CD4-positive, alpha-beta T cell (primary cell): ENCODE measurements at regions of chr2 and their contacts with region 1.

Region 1: GRCh38 chr2:143259368-143259958 is 130.2 kb downstream of the ARHGAP15 start:
- DNase-seq: peak; percentile 56 to 89 (median 66)
- ATAC-seq: peak; percentile 39
- H3K4me3 ChIP-seq: peak overlapping the region; percentile 13
- H3K4me3 Mint-ChIP-seq: peak overlapping the region; percentile 81
- H3K27ac ChIP-seq: peak overlapping the region in 1 of 2 donors; percentile 50
- H3K27ac Mint-ChIP-seq: peak overlapping the region; percentile 86
- H3K4me1 ChIP-seq: peaks cover 43% of the 10 kb centered on the region
- H3K4me1 Mint-ChIP-seq: peaks cover 85% of the 10 kb centered on the region
- H3K27me3 ChIP-seq: no peaks in the 10 kb centered on the region
- H3K27me3 Mint-ChIP-seq: no peaks in the 10 kb centered on the region
- CTCF ChIP-seq: peak; percentile 89

Region 2: DNA sequence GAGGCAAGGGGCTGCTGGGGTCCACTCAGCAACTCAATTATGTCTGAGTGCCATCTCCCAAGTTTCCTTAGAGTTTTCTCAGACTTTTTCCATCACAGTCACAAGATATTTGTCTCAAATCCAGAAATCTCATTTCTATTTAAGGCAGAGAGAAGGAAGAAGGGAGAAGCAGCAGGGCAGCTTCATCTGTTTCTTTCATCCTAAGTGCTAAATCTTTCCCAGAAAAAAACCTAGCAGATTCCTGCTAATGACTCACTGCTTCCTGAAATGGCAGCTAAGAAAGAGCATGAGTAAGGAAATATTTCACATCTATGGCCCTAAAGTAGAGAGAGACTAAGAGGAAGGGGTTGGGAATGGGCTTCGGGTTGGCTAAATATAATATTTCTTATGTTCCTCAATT is 294.0 kb before region 1 on chr2:
- CTCF ChIA-PET with region 1: no interaction called
- POLR2A ChIA-PET with region 1: no interaction called
- intact Hi-C with region 1: no loop called
- DNase-seq: no peak
- ATAC-seq: no peak
- H3K4me3 ChIP-seq: no peak overlapping the region
- H3K4me3 Mint-ChIP-seq: no peak overlapping the region
- H3K27ac ChIP-seq: no peak overlapping the region
- H3K27ac Mint-ChIP-seq: no peak overlapping the region
- H3K4me1 ChIP-seq: no peaks in the 10 kb centered on the region
- H3K4me1 Mint-ChIP-seq: no peaks in the 10 kb centered on the region
- H3K27me3 ChIP-seq: no peaks in the 10 kb centered on the region
- H3K27me3 Mint-ChIP-seq: peaks cover 4% of the 10 kb centered on the region
- CTCF ChIP-seq: no peak

Region 3: GRCh38 chr2:143001501-143001900 is 258.0 kb before region 1 on chr2:
- CTCF ChIA-PET with region 1: no interaction called
- POLR2A ChIA-PET with region 1: no interaction called
- intact Hi-C with region 1: no loop called
- DNase-seq: no peak
- ATAC-seq: no peak
- H3K4me3 ChIP-seq: no peak overlapping the region
- H3K4me3 Mint-ChIP-seq: no peak overlapping the region
- H3K27ac ChIP-seq: no peak overlapping the region
- H3K27ac Mint-ChIP-seq: no peak overlapping the region
- H3K4me1 ChIP-seq: no peaks in the 10 kb centered on the region
- H3K4me1 Mint-ChIP-seq: no peaks in the 10 kb centered on the region
- H3K27me3 ChIP-seq: peaks cover 2 to 15% of the 10 kb centered on the region in 2 experiments
- H3K27me3 Mint-ChIP-seq: peaks cover 64% of the 10 kb centered on the region
- CTCF ChIP-seq: no peak

Region 4: DNA sequence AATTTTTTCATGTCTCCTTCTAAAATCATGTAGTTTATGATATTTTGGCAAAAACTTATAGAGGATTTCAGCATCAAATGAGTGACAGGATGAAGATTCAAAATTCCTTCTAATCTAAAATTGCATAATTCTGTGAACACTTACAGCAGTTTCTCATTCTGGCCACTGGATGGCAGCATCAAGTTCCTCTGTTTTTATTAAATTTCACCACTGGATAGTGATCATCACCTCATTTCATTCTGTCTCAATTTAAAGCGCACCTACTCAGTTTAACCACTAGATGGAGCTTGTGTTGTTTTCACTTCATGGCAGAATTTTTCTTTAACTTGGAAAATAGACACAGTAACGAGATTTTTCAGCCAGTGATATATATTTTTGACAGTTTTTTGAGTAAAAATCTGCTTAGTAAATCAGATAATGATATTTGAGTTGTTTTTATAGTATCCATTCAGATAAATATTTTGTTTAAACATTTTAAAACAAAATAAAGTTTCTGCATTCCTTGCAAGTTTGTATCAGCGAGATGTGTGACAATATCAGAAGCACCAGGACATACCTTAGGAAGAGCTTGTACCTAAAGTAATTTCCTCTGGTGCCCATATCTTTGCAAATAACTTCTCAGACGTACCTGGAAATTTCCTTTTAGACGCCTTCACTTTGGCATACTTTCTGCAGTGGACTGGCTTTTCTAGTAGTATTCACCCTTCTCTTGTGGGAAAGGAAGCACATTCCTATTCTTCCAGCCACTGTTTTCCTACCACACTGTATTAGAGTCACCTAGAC is 225.0 kb before region 1 on chr2:
- CTCF ChIA-PET with region 1: interaction called, 16 read pairs
- POLR2A ChIA-PET with region 1: interaction called, 4 read pairs
- intact Hi-C with region 1: loop called (anchors 1 to 2 kb)
- DNase-seq: peak; percentile 20 to 88 (median 38)
- ATAC-seq: peak; percentile 100
- H3K4me3 ChIP-seq: no peak overlapping the region
- H3K4me3 Mint-ChIP-seq: no peak overlapping the region
- H3K27ac ChIP-seq: no peak overlapping the region
- H3K27ac Mint-ChIP-seq: no peak overlapping the region
- H3K4me1 ChIP-seq: no peaks in the 10 kb centered on the region
- H3K4me1 Mint-ChIP-seq: no peaks in the 10 kb centered on the region
- H3K27me3 ChIP-seq: no peaks in the 10 kb centered on the region
- H3K27me3 Mint-ChIP-seq: peaks cover 3% of the 10 kb centered on the region
- CTCF ChIP-seq: peak; percentile 98

Region 5: GRCh38 chr2:143128681-143129580 is 130.5 kb before region 1 on chr2 and contains the start of gene ARHGAP15:
- CTCF ChIA-PET with region 1: interaction called, 8 read pairs
- POLR2A ChIA-PET with region 1: interaction called, 58 read pairs
- intact Hi-C with region 1: loop called in 1 of 2 experiments (anchors 5 kb)
- DNase-seq: peak; percentile 55 to 93 (median 67)
- ATAC-seq: peak; percentile 85
- H3K4me3 ChIP-seq: peak within 1 kb of the TSS; percentile 58
- H3K4me3 Mint-ChIP-seq: peak within 1 kb of the TSS; percentile 85
- H3K27ac ChIP-seq: peak within 1 kb of the TSS; percentile 78 to 94
- H3K27ac Mint-ChIP-seq: no peak within 1 kb of the TSS
- H3K4me1 ChIP-seq: peaks cover 52% of the 10 kb centered on the region
- H3K4me1 Mint-ChIP-seq: peaks cover 44% of the 10 kb centered on the region
- H3K27me3 ChIP-seq: no peaks in the 10 kb centered on the region
- H3K27me3 Mint-ChIP-seq: no peaks in the 10 kb centered on the region
- CTCF ChIP-seq: peak; percentile 25
- total RNA-seq, gene ARHGAP15: 158 to 165 TPM

Region 6: DNA sequence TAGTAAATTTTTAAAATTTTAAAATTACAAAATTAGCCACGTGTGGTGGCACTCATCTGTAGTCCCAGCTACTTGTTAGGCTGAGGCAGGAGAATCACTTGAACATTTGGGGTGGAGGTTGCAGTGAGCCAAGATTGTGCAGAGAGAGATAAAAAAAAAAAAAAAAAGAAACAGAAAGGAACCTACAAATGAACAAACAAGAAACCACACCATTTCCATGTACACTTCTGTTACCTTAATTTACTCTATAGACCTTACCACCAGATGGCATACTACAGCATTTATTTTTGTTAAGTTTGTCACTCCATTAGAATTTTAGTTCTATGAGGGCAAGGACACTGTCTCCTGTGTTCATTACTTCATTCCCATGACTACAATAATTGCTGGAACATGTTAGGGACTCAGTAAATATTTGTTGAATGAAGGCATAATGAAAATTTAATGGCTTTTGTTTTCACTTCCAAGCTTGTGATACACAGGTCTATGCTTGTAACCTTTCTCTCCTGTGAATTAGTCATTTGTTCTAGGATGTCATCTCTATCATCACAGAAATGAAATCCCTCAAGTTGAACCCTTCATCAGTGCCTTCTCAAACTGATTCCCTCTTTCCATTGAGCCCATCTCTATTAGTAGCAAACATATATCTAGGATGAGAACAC is 54.2 kb before region 1 on chr2:
- CTCF ChIA-PET with region 1: interaction called, 24 read pairs
- POLR2A ChIA-PET with region 1: interaction called, 34 read pairs
- intact Hi-C with region 1: loop called (anchors 1 kb)
- DNase-seq: peak in 4 of 14 experiments; percentile 15 to 72 (median 69)
- ATAC-seq: peak; percentile 90
- H3K4me3 ChIP-seq: no peak overlapping the region
- H3K4me3 Mint-ChIP-seq: no peak overlapping the region
- H3K27ac ChIP-seq: no peak overlapping the region
- H3K27ac Mint-ChIP-seq: peak overlapping the region; percentile 40
- H3K4me1 ChIP-seq: peaks cover 14% of the 10 kb centered on the region
- H3K4me1 Mint-ChIP-seq: peaks cover 67% of the 10 kb centered on the region
- H3K27me3 ChIP-seq: no peaks in the 10 kb centered on the region
- H3K27me3 Mint-ChIP-seq: no peaks in the 10 kb centered on the region
- CTCF ChIP-seq: peak; percentile 56

Region 7: DNA sequence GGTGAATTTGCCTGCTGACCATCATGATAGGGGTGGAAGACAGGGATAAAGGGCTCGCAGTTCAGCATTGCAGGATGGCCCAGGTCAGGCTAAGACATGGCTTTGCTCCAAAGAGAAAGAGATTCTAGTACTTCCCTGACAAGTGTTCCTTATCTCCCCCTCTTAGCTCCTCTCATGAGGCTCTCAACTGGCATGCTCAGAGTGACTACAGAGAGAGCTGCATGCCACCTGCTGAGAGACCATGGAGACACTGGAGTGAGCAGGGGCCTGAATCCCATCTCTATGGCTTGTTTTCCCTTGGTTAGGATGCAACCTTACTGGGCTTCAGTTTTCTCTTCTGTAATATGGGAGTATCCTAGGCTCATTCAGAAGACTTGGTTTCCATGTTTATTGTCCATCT is 35.9 kb before region 1 on chr2:
- CTCF ChIA-PET with region 1: interaction called, 16 read pairs
- POLR2A ChIA-PET with region 1: interaction called, 10 read pairs
- intact Hi-C with region 1: loop called (anchors 5 kb)
- DNase-seq: no peak
- ATAC-seq: no peak
- H3K4me3 ChIP-seq: no peak overlapping the region
- H3K4me3 Mint-ChIP-seq: no peak overlapping the region
- H3K27ac ChIP-seq: no peak overlapping the region
- H3K27ac Mint-ChIP-seq: peak overlapping the region; percentile 67
- H3K4me1 ChIP-seq: peaks cover 7% of the 10 kb centered on the region
- H3K4me1 Mint-ChIP-seq: peaks cover 69% of the 10 kb centered on the region
- H3K27me3 ChIP-seq: no peaks in the 10 kb centered on the region
- H3K27me3 Mint-ChIP-seq: no peaks in the 10 kb centered on the region
- CTCF ChIP-seq: no peak

Region 8: GRCh38 chr2:143246815-143247744 is 12.4 kb before region 1 on chr2:
- CTCF ChIA-PET with region 1: interaction called, 10 read pairs
- POLR2A ChIA-PET with region 1: interaction called, 40 read pairs
- intact Hi-C with region 1: no loop called
- DNase-seq: peak in 10 of 14 experiments; percentile 12 to 67 (median 40)
- ATAC-seq: peak; percentile 71
- H3K4me3 ChIP-seq: peak overlapping the region; percentile 62
- H3K4me3 Mint-ChIP-seq: no peak overlapping the region
- H3K27ac ChIP-seq: peak overlapping the region; percentile 43 to 58
- H3K27ac Mint-ChIP-seq: no peak overlapping the region
- H3K4me1 ChIP-seq: peaks cover 22% of the 10 kb centered on the region
- H3K4me1 Mint-ChIP-seq: peaks cover 21% of the 10 kb centered on the region
- H3K27me3 ChIP-seq: no peaks in the 10 kb centered on the region
- H3K27me3 Mint-ChIP-seq: no peaks in the 10 kb centered on the region
- CTCF ChIP-seq: no peak